BJ (cell line): ENCODE measurements at regions of chr12 and their contacts with region 1.

Region 1: GRCh38 chr12:44774815-44775411 is 101.2 kb downstream of the NELL2 start:
- DNase-seq: no peak
- H3K4me3 ChIP-seq: no peak overlapping the region
- H3K27me3 ChIP-seq: no peaks in the 10 kb centered on the region
- CTCF ChIP-seq: peak; percentile 73

Region 2: GRCh38 chr12:43599071-43599470 is 1175.8 kb before region 1 on chr12:
- CTCF ChIA-PET with region 1: no interaction called
- POLR2A ChIA-PET with region 1: no interaction called
- DNase-seq: no peak
- H3K4me3 ChIP-seq: no peak overlapping the region
- H3K27me3 ChIP-seq: no peaks in the 10 kb centered on the region
- CTCF ChIP-seq: no peak

Region 3: GRCh38 chr12:44763021-44763420 is 11.9 kb before region 1 on chr12:
- CTCF ChIA-PET with region 1: interaction called, 12 read pairs
- POLR2A ChIA-PET with region 1: no interaction called
- DNase-seq: no peak
- H3K4me3 ChIP-seq: no peak overlapping the region
- H3K27me3 ChIP-seq: no peaks in the 10 kb centered on the region
- CTCF ChIP-seq: no peak